ENCODE measurements at regions of chr6 and their contacts with region 1.

Region 1: DNA sequence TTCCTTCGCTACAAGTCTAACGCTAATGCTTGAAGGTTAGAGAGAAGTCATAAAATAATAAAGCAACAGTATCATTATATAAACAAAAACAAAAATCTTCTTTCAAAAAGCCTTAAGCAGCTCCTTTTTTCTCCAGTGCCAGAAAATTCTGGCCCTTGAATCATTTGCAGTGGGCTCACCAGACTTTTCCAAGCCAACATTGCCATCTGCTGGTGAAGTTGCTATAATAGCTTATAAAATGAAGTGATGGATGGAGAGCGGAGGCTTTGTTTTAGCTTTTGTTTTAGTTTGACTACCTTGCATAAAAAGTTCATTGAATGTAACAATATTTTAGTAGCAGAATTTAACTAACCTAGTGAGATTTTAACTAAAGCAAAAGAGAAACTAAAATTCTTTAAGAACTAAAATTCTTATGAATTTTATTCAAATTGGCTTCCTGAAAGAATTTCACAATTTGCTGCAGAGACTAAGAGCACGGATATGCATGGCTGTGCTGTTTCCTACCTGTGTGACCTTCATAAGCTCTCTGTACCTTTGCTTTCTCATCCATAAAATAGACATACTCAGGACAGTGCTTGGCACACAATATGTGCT is 44.8 kb upstream of the SLC2A12 start:
- DNase-seq: peak; percentile 3
- ATAC-seq: peak; percentile 66
- H3K4me3 ChIP-seq: no peak overlapping the region
- H3K27ac ChIP-seq: no peak overlapping the region
- H3K4me1 ChIP-seq: no peaks in the 10 kb centered on the region
- H3K27me3 ChIP-seq: no peaks in the 10 kb centered on the region
- CTCF ChIP-seq: peak; percentile 43 to 64 (median 54); a peak in 4 of 6 replicates
- EP300 ChIP-seq: no peak
- POLR2A ChIP-seq: no peak
- RAD21 ChIP-seq: peak; percentile 91

Region 2: GRCh38 chr6:132830334-132830751 is 1266.9 kb before region 1 on chr6:
- CTCF ChIA-PET with region 1: no interaction called
- POLR2A ChIA-PET with region 1: no interaction called
- RAD21 ChIA-PET with region 1: no interaction called
- SMC1A ChIA-PET with region 1: no interaction called
- in situ Hi-C with region 1: no loop called
- intact Hi-C with region 1: loop called (anchors 10 kb)
- DNase-seq: no peak
- ATAC-seq: peak; percentile 55
- H3K4me3 ChIP-seq: no peak overlapping the region
- H3K27ac ChIP-seq: no peak overlapping the region
- H3K4me1 ChIP-seq: no peaks in the 10 kb centered on the region
- H3K27me3 ChIP-seq: no peaks in the 10 kb centered on the region
- CTCF ChIP-seq: peak; percentile 25 to 53 (median 32); a peak in 4 of 6 replicates
- EP300 ChIP-seq: no peak
- POLR2A ChIP-seq: no peak
- RAD21 ChIP-seq: peak; percentile 82

Region 3: DNA sequence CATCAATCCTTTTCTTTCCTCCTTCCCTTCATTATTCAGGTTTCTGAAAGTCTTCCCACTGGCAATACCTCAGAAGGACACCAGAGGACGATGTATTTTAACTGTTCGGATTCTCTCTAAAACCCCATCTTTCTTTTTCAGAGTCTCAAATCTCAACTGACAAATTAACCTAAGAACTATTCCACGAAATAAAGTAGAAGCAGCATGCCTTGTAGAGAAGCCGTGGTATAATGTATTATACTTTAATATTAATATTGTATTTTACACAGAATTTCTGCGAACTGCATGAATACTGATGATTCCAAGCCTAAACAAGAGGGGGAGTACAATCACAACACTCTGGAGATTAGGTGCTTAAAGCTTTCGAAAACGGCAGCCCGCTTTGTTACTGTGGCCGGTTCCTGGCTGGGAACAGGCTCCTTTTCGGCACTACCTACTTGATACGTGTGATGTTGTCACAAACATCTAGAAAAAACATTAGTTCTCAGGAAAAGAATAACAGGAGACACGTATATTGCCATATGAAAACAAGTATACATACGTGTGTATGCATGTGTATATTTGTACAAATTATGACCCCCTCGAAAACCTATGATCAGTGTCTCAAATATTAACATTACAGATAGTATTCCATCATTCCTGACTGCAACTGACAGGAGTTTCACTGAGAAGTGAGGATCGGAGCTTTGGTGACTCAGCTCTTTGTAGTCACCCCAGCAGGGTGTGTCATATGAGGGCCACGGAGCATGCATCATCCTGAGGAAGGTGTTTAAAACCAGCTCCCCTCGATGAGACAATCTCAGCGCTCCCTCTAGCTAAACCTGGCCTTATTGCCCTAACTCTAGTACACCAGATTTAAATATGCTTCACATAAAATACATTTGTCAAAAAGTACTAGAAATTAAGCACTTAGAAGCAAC is 528.0 kb before region 1 on chr6:
- CTCF ChIA-PET with region 1: interaction called, 7 read pairs
- POLR2A ChIA-PET with region 1: no interaction called
- RAD21 ChIA-PET with region 1: no interaction called
- SMC1A ChIA-PET with region 1: no interaction called
- in situ Hi-C with region 1: loop called (anchors 25 kb)
- intact Hi-C with region 1: loop called (anchors 10 kb)
- DNase-seq: no peak
- ATAC-seq: peak; percentile 55
- H3K4me3 ChIP-seq: no peak overlapping the region
- H3K27ac ChIP-seq: no peak overlapping the region
- H3K4me1 ChIP-seq: no peaks in the 10 kb centered on the region
- H3K27me3 ChIP-seq: no peaks in the 10 kb centered on the region
- CTCF ChIP-seq: peak; percentile 43 to 59 (median 55)
- EP300 ChIP-seq: no peak
- POLR2A ChIP-seq: no peak
- RAD21 ChIP-seq: peak; percentile 63

Region 4: DNA sequence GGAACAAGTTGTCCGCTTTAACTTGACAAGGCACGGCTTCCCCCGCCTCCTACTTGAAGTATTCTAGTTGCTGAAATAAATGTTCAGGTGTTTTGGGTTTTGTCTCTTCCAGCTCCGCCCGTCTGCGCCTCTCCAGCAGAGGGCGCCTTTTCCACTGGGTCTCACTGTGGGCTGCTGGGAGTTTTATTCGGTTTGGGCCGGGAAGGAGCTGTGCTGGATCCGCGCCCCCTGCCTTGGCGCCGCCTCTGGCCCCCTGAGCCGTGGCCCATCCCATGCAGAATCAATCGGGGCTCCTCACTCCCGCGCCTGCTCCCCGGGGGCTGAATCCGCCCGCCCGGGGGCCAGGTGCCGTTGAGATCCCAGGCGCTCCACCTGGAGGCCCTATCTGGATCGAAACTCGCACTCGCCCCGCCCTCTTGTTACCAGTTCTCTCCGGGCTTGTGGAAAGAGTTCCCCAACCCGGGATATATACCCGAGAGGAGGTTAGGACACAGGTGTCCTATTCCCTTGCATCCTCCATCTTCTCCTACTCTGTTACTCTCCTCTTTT is 259.3 kb before region 1 on chr6:
- CTCF ChIA-PET with region 1: interaction called, 12 read pairs
- POLR2A ChIA-PET with region 1: no interaction called
- RAD21 ChIA-PET with region 1: interaction called, 4 read pairs
- SMC1A ChIA-PET with region 1: interaction called, 6 read pairs
- in situ Hi-C with region 1: loop called (anchors 5 kb)
- intact Hi-C with region 1: loop called (anchors 5 kb)
- DNase-seq: no peak
- ATAC-seq: peak; percentile 95
- H3K4me3 ChIP-seq: peak overlapping the region; percentile 41; the same call in 1 of the 2 replicates
- H3K27ac ChIP-seq: no peak overlapping the region
- H3K4me1 ChIP-seq: no peaks in the 10 kb centered on the region
- H3K27me3 ChIP-seq: no peaks in the 10 kb centered on the region
- CTCF ChIP-seq: peak; percentile 65 to 80 (median 70)
- EP300 ChIP-seq: no peak
- POLR2A ChIP-seq: no peak
- RAD21 ChIP-seq: peak; percentile 41

Region 5: DNA sequence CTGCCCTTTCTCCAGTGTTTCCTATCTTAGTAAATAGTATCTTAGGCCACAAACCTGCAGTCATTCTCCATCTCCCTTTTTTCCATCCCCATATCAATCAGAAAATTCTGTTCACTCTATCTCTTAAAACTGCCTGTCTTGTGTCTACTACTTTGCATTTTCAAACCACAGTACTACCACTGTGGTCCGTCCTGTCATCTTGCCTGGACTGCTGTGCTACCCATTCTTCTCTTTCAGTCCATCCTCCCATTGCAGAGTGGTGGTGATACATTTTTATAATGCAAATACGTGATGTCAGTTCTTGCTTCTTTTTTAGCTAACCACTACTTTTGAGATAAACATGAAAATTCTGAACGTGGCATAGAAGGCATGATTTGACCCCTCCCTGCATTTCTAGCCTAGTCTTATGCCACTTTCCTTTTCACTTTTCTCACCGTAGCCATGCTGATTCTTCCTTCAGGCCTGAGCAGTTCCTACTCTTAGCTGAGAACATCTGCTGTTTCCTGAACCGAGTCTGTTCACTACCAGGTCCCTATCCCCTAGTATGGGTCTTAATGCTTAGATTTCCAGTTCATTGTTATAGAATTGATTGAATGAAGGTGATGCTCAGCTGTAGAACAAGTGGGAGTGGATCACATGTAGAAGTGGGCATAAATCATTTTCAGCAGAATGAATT is 130.4 kb before region 1 on chr6:
- CTCF ChIA-PET with region 1: interaction called, 13 read pairs
- POLR2A ChIA-PET with region 1: no interaction called
- RAD21 ChIA-PET with region 1: interaction called, 3 read pairs
- SMC1A ChIA-PET with region 1: interaction called, 9 read pairs
- in situ Hi-C with region 1: no loop called
- intact Hi-C with region 1: no loop called
- DNase-seq: peak; percentile 34
- ATAC-seq: peak; percentile 85
- H3K4me3 ChIP-seq: peak overlapping the region; percentile 4; the same call in 1 of the 2 replicates
- H3K27ac ChIP-seq: peak overlapping the region; percentile 30
- H3K4me1 ChIP-seq: peaks cover 14% of the 10 kb centered on the region; the same call in 1 of the 2 replicates
- H3K27me3 ChIP-seq: no peaks in the 10 kb centered on the region
- CTCF ChIP-seq: no peak
- EP300 ChIP-seq: no peak
- POLR2A ChIP-seq: no peak
- RAD21 ChIP-seq: no peak

Region 6: DNA sequence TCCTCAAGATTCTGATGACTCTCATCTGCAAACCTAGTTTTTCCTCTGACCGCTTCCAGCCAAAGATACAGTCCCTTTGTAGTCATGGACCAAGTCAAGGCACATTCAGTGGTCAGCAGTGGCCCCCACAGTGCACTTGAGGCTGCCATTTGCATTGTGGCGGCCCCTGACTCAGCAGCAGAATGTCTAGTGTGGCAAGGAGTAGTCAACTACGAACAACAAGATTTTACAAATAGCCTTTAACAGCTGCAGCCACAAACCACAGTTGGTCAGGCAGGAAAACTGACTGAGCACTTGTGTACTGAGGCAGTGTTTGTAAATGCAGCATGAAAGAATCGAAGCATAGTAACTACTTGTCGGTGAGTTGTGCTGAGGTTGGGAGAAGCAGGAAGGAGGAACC is 94.4 kb before region 1 on chr6:
- CTCF ChIA-PET with region 1: interaction called, 12 read pairs
- POLR2A ChIA-PET with region 1: no interaction called
- RAD21 ChIA-PET with region 1: no interaction called
- SMC1A ChIA-PET with region 1: interaction called, 3 read pairs
- in situ Hi-C with region 1: no loop called
- intact Hi-C with region 1: no loop called
- DNase-seq: no peak
- ATAC-seq: peak; percentile 61
- H3K4me3 ChIP-seq: no peak overlapping the region
- H3K27ac ChIP-seq: no peak overlapping the region
- H3K4me1 ChIP-seq: no peaks in the 10 kb centered on the region
- H3K27me3 ChIP-seq: no peaks in the 10 kb centered on the region
- CTCF ChIP-seq: no peak
- EP300 ChIP-seq: no peak
- POLR2A ChIP-seq: no peak
- RAD21 ChIP-seq: no peak

Region 7: DNA sequence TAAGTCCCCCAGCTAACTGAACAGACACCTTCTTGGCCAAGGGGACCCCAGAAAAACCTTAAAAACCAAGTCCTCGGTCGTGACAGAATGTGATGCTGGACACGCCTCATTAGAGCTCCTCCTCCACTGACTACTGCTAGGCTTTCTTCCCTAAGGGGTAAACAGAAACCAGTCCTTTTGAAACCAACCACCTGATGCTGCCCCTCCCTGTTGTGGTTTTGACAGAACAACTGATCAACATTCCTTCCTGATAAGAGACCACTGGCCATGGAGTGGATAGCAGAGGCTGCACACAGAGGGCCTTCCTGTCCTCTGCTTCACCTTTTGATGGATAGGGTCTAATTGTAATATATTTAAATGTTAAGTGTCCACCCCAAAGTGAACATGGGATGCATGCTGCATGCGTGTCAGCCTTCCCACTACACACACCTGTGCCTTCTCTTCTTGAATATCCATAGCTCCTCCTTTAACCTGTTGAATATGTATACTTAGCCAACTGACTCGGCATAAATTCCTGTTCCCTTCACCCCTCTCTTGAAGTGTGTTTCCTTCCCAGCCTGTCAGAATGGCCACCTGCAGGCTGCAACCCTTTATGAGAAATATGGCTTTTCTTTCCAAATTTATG is 16.9 kb before region 1 on chr6:
- CTCF ChIA-PET with region 1: interaction called, 6 read pairs
- POLR2A ChIA-PET with region 1: no interaction called
- RAD21 ChIA-PET with region 1: interaction called, 3 read pairs
- SMC1A ChIA-PET with region 1: interaction called, 10 read pairs
- in situ Hi-C with region 1: no loop called
- intact Hi-C with region 1: no loop called
- DNase-seq: no peak
- ATAC-seq: peak; percentile 42; the same call in 2 of the 3 replicates
- H3K4me3 ChIP-seq: no peak overlapping the region; the same call in 1 of the 2 replicates
- H3K27ac ChIP-seq: no peak overlapping the region
- H3K4me1 ChIP-seq: peaks cover 8% of the 10 kb centered on the region; the same call in 1 of the 2 replicates
- H3K27me3 ChIP-seq: no peaks in the 10 kb centered on the region
- CTCF ChIP-seq: no peak
- EP300 ChIP-seq: no peak
- POLR2A ChIP-seq: no peak
- RAD21 ChIP-seq: no peak

Measured in GM12878 (cell line).